ENCODE measurements at regions of chr16 and their contacts with region 1.

Region 1: GRCh38 chr16:88856828-88857733 is at the starts of genes GALNS and TRAPPC2L:
- DNase-seq: peak; percentile 89
- ATAC-seq: peak; percentile 81
- H3K4me3 ChIP-seq: peak within 1 kb of the TSS; percentile 68 to 100 (median 98)
- H3K27ac ChIP-seq: peak within 1 kb of the TSS; percentile 62
- H3K4me1 ChIP-seq: peaks cover 15% of the 10 kb centered on the region
- H3K27me3 ChIP-seq: no peaks in the 10 kb centered on the region; a peak in 1 of 5 replicates
- CTCF ChIP-seq: no peak
- EP300 ChIP-seq: no peak
- POLR2A ChIP-seq: peak; percentile 94 to 97
- RAD21 ChIP-seq: peak; percentile 31; the same call in 1 of the 2 replicates
- total RNA-seq, gene GALNS: 2.8 and 9.2 TPM in 2 replicates
- total RNA-seq, gene TRAPPC2L: 107 and 158 TPM in 2 replicates

Region 2: DNA sequence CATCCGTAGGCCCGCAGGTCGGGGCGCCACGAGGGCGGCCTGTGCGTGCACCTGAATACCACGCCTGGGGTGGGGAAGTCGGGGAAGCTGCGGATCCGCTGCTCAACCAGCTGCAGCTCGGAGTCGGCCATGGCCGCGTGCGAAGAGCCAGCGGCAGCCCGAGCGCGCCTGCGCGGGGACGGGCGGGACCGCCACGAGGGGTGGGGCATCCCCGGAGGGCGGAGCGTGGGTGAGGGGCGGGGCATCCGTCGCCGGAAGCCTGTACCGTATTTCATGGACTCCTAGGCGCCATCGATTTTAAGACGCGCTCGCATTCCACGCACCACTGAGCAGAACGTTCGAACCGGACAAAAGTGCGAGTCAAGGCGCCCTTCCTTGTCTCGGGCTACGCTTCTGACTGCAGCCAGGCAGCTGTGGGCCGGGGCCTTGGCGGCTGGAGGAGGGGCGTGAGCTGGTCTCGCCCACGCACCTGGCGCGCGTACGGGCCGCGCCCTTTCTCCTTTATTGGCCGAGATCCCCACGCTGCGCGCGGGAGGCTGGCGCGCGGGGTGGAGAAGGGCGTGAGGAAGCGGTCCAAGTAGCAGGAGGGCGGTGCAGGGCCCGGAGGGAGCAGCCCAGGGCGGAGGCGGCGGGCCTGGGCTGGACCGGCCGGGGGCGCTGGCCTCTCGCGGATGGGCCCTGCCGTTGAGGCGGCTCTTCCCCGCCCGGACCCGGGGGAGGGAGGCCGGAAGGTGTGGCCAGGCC is 45.1 kb before region 1 on chr16 and contains the start of gene APRT:
- CTCF ChIA-PET with region 1: interaction called, 11 read pairs
- POLR2A ChIA-PET with region 1: interaction called, 29 read pairs
- in situ Hi-C with region 1: loop called (anchors 5 kb)
- intact Hi-C with region 1: loop called (anchors 5 kb)
- DNase-seq: peak; percentile 83
- ATAC-seq: peak; percentile 65
- H3K4me3 ChIP-seq: peak within 1 kb of the TSS; percentile 72 to 90 (median 74)
- H3K27ac ChIP-seq: peak within 1 kb of the TSS; percentile 76
- H3K4me1 ChIP-seq: peaks cover 33% of the 10 kb centered on the region
- H3K27me3 ChIP-seq: no peaks in the 10 kb centered on the region; a peak in 1 of 5 replicates
- CTCF ChIP-seq: peak; percentile 55
- EP300 ChIP-seq: no peak
- POLR2A ChIP-seq: peak in 1 of 2 experiments; percentile 94; a peak in 2 of 4 replicates
- RAD21 ChIP-seq: peak; percentile 76
- total RNA-seq, gene APRT: 242 and 274 TPM in 2 replicates

Region 3: DNA sequence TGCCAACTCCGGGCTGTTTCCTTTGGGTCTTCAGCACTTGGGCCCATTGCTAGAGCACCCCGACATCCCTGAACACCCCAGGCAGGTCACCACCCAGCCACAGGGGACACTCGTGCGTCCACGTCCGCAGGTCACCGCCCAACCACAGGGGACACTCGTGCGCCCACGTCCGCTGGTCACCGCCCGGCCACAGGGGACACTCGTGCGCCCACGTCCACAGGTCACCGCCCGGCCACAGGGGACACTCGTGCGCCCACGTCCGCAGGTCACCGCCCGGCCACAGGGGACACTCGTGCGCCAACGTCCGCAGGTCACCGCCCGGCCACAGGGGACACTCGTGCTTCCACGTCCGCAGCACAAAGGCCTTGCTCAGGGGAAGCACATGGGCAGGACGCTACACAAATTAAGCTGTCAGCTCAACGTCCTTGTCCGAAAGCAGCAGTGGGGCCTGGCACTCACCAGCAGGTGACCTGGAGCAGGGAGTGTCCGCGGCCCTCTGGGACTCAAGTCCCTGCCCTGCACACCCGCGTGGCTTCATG is 18.0 kb before region 1 on chr16:
- CTCF ChIA-PET with region 1: interaction called, 22 read pairs
- POLR2A ChIA-PET with region 1: no interaction called
- in situ Hi-C with region 1: no loop called
- intact Hi-C with region 1: loop called (anchors 1 kb)
- DNase-seq: peak; percentile 71
- ATAC-seq: peak; percentile 33
- H3K4me3 ChIP-seq: no peak overlapping the region
- H3K27ac ChIP-seq: peak overlapping the region; percentile 7
- H3K4me1 ChIP-seq: no peaks in the 10 kb centered on the region
- H3K27me3 ChIP-seq: no peaks in the 10 kb centered on the region
- CTCF ChIP-seq: peak; percentile 93
- EP300 ChIP-seq: 0 out of 4 replicates have a peak, but pooled peaks of 1 of the 2 experiments have one; percentile 14
- POLR2A ChIP-seq: no peak
- RAD21 ChIP-seq: no peak; the same call in 1 of the 2 replicates

Measured in HepG2 (cell line).